ENCODE measurements at regions of chr7 and their contacts with region 1.

Region 1: DNA sequence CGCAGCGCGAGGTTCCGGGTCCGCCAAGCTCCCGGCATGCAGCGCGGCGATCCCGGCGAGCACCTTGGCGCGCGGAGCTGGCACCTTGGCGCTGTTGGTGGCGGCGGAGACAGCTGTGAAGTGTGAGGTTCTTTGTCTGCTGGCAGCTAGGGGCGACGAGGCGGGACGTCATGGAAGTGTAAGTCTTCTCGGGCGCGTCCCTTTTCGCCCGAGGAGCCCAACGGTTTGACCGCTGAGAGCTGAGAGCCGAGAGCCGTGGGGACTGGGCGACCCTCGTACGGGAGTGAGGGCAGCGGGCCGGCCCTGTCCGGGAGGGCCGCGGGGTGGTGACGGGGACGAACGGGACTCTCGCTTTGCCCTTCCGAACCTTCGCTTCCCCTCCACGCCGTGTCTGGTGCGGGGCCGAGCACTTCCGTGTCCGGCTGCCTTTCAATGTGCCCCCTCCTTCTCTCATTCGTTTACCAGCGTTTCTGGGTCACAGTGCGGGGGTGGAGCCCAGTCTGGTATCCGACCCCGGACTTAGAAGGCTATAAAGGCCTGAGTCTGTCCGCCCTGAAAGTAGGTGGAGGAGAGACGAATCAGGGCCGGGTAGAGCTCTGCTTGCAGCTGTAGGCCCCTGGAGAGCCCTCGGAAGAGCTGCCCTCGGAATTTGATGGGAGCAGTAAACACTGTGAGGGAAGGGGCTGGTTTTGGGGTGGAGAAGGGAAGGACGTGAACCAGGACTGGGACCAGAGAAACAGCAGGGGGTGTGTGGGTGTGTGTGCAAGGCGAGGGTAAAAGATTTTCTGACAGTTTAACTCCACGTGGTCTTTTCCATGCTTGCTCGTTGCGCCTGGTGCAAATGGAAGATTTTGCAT is at the start of gene CRCP:
- DNase-seq: peak; percentile 78 to 87 (median 83)
- ATAC-seq: peak; percentile 94
- H3K4me3 ChIP-seq: peak within 1 kb of the TSS; percentile 87
- H3K4me3 Mint-ChIP-seq: peak within 1 kb of the TSS; percentile 94 to 98 (median 96)
- H3K27ac ChIP-seq: peak within 1 kb of the TSS; percentile 95
- H3K27ac Mint-ChIP-seq: peak within 1 kb of the TSS; percentile 94 to 98 (median 96)
- H3K4me1 ChIP-seq: peaks cover 14 to 26% of the 10 kb centered on the region in 2 donors
- H3K4me1 Mint-ChIP-seq: peaks cover 28 to 56% (median 47%) of the 10 kb centered on the region in 7 donors
- H3K27me3 ChIP-seq: no peaks in the 10 kb centered on the region
- H3K27me3 Mint-ChIP-seq: no peaks in the 10 kb centered on the region
- total RNA-seq, gene CRCP: 29.8 to 37.9 (median 34.0) TPM

Region 2: DNA sequence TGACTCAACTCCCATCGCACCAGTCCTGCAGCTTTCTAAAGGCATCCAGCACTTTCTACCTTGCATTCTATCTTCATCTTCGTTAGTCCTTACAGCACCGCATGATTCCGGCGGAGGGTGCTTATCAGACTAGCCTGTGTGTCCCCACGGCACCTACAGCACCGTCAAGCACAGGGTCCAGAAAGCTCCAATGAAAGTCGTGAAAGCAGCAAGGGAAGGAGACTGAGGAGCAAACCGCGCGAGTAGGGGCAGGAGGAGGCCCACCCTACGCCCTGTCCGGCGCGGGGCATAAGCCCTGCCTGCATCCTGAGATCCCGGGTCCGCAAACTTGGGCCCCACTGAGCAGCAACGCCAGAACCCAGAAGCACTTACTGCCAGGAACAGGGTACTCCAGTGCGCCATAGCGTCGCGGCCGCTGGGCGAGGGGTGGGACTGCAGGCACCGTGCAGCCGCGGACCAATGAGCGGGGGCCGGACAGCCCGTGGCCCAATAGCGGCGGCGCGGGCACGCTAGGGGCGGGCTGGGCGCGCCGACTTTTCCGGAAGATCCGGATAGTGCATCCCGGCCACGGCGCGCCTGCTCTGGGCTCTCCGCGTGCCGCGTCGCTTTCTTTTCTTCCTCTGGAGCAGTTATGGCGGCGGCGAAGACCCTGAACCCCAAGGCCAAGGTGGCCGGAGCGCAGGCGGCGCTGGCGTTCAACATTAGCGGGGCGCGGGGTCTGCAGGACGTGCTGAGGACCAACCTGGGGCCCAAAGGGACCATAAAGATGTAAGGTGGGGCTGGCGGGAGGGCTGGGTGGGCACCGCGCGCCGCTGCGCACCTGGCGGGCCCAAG is 364.3 kb before region 1 on chr7:
- CTCF ChIA-PET with region 1: no interaction called
- POLR2A ChIA-PET with region 1: no interaction called
- intact Hi-C with region 1: loop called in 1 of 2 experiments (anchors 10 kb)
- DNase-seq: peak; percentile 76 to 91 (median 80)
- ATAC-seq: peak; percentile 99
- H3K4me3 ChIP-seq: peak overlapping the region; percentile 97
- H3K4me3 Mint-ChIP-seq: peak overlapping the region; percentile 90 to 100 (median 98)
- H3K27ac ChIP-seq: peak overlapping the region; percentile 85
- H3K27ac Mint-ChIP-seq: peak overlapping the region; percentile 75 to 95 (median 87)
- H3K4me1 ChIP-seq: peaks cover 6 to 7% of the 10 kb centered on the region in 2 donors
- H3K4me1 Mint-ChIP-seq: peaks cover 0 to 35% (median 20%) of the 10 kb centered on the region in 7 donors
- H3K27me3 ChIP-seq: no peaks in the 10 kb centered on the region
- H3K27me3 Mint-ChIP-seq: no peaks in the 10 kb centered on the region

Region 3: DNA sequence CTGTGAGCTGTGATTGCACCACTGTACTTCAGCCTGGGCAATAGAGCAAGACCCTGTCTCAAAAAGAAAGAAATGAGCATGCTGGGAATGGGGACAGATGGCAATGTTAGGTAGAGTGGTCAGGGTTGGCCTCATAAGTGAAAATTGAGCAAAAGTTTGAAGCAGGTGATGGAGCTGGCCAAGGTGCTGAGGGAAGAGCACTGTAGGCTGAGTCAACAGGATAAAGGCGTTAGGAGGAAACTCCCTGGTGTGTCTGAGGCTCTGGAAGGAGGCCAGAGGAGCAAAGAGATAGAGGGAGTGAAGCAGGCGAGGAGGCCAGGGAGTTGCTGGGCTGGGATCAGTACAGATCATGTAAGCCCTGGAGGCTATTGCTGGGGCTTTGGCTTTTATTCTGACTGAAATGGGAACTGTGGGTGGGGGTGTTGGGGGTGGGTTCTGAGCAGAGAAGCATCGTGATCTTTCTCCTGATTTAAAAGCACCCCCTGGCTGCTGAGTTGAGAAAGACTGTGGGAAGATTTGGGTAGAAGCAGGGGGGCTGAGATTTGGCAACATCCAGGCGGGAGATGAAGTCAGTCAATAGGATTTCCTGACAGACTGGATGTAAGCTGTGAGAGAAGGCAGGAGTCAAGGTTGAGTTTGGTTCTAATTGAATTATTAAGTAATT is 294.6 kb before region 1 on chr7:
- CTCF ChIA-PET with region 1: no interaction called
- POLR2A ChIA-PET with region 1: no interaction called
- intact Hi-C with region 1: no loop called
- DNase-seq: no peak
- ATAC-seq: no peak
- H3K4me3 ChIP-seq: no peak overlapping the region
- H3K4me3 Mint-ChIP-seq: no peak overlapping the region
- H3K27ac ChIP-seq: no peak overlapping the region
- H3K27ac Mint-ChIP-seq: no peak overlapping the region
- H3K4me1 ChIP-seq: no peaks in the 10 kb centered on the region
- H3K4me1 Mint-ChIP-seq: no peaks in the 10 kb centered on the region
- H3K27me3 ChIP-seq: no peaks in the 10 kb centered on the region
- H3K27me3 Mint-ChIP-seq: no peaks in the 10 kb centered on the region

Region 4: GRCh38 chr7:66099616-66100474 is 15.2 kb before region 1 on chr7:
- CTCF ChIA-PET with region 1: no interaction called
- POLR2A ChIA-PET with region 1: interaction called, 6 read pairs
- intact Hi-C with region 1: loop called (anchors 1 kb)
- DNase-seq: peak in 7 of 9 donors; percentile 13 to 33 (median 26)
- ATAC-seq: peak; percentile 81
- H3K4me3 ChIP-seq: peak overlapping the region; percentile 65
- H3K4me3 Mint-ChIP-seq: peak overlapping the region; percentile 83 to 100 (median 92)
- H3K27ac ChIP-seq: peak overlapping the region; percentile 61
- H3K27ac Mint-ChIP-seq: peak overlapping the region; percentile 81 to 99 (median 94)
- H3K4me1 ChIP-seq: no peaks in the 10 kb centered on the region
- H3K4me1 Mint-ChIP-seq: peaks cover 10 to 15% (median 11%) of the 10 kb centered on the region in 7 donors
- H3K27me3 ChIP-seq: no peaks in the 10 kb centered on the region
- H3K27me3 Mint-ChIP-seq: no peaks in the 10 kb centered on the region

Region 5: DNA sequence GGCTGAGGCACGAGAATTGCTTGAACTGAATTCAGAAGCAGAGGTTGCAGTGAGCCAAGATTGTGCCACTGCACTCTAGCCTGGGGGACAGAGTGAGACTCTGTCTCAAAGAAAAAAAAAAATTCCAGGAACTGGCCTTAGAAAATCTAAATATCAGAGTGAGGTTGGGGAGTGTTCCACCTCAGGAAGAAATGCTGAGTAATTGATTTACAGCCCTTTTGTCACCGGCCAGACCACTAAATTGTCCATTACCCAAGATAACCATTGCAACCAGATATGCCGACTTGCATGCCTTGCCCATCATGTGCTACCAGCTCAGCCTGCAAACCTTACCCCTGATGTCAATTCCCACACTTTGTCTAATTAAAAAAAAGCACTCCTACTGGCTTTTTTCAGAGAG is 42.0 kb after region 1 on chr7:
- CTCF ChIA-PET with region 1: no interaction called
- POLR2A ChIA-PET with region 1: no interaction called
- intact Hi-C with region 1: no loop called
- DNase-seq: no peak
- ATAC-seq: no peak
- H3K4me3 ChIP-seq: no peak overlapping the region
- H3K4me3 Mint-ChIP-seq: no peak overlapping the region
- H3K27ac ChIP-seq: no peak overlapping the region
- H3K27ac Mint-ChIP-seq: no peak overlapping the region
- H3K4me1 ChIP-seq: no peaks in the 10 kb centered on the region
- H3K4me1 Mint-ChIP-seq: no peaks in the 10 kb centered on the region
- H3K27me3 ChIP-seq: no peaks in the 10 kb centered on the region
- H3K27me3 Mint-ChIP-seq: no peaks in the 10 kb centered on the region

Region 6: DNA sequence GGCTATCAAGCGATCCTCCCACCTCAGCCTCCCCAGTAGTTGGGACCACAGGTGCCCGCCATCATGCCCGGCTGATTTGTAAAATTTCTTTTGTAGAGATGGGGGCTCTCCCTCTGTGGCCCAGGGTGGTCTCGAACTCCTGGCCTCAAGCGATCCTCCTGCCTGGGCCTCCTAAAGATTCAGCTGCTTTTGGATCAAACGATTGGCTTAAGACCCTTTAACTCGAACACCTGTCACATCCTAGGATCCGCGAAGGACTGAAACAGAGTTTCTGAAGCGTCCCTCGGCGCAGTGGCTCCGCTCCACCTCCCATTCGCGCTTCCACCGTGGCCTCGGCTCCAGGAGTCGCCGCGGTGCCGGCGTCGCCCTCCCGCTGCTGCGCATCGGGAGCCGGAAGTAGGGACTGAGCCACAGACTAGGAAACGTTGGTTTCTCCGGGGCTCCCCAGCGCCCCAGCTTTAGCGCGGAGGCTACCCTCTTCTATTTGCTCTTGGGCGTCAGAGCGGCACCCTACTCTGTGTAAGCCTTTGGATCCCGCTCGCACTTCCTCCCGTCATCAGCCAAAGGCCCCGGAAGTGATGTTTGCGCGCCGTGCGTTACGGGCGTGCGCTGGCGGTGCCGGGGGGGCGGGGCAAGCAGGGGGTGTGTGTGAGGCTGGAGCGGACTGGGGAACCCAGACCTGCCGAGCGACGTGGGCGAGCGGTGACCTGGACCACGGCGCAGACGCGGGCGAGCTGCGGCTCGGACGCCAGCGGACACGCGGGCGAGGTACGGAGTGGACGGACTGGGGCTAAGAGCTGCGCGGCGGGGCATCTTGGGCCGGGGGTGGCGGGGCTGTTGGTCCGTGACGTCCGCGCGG is 566.7 kb after region 1 on chr7:
- CTCF ChIA-PET with region 1: no interaction called
- POLR2A ChIA-PET with region 1: no interaction called
- intact Hi-C with region 1: loop called in 1 of 2 experiments (anchors 1 kb)
- DNase-seq: peak; percentile 92 to 97 (median 95)
- ATAC-seq: peak; percentile 98
- H3K4me3 ChIP-seq: peak overlapping the region; percentile 96
- H3K4me3 Mint-ChIP-seq: peak overlapping the region; percentile 82 to 96 (median 92)
- H3K27ac ChIP-seq: peak overlapping the region; percentile 95
- H3K27ac Mint-ChIP-seq: peak overlapping the region; percentile 86 to 98 (median 97)
- H3K4me1 ChIP-seq: peaks cover 5 to 11% of the 10 kb centered on the region in 2 donors
- H3K4me1 Mint-ChIP-seq: peaks cover 7 to 59% (median 31%) of the 10 kb centered on the region in 7 donors
- H3K27me3 ChIP-seq: no peaks in the 10 kb centered on the region
- H3K27me3 Mint-ChIP-seq: no peaks in the 10 kb centered on the region